Panc1 (cell line): ENCODE measurements at regions of chr2 and their contacts with region 1.

Region 1: DNA sequence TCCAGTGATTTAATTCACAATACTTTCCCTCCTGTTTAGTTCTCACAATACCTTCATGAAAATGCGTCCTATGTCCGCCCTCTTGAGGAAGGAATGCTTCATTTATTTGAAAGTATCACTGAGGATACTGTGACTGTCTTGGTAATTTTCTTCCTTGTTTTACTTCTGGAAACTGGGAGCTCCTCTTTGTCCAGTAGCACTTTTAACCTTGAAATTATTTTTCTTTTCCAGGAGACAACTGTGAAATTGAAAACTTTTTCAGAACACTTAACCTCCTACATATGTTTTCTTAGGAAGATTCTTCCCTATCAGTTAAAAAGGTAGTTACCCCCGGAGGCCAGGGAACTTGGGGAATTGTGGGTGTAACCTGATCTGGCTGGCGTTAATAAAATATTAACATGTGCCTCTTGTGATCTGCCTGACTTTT is 58.9 kb upstream of the STON1 start:
- DNase-seq: peak; percentile 32
- ATAC-seq: peak; percentile 84
- H3K4me3 ChIP-seq: no peak overlapping the region
- H3K27ac ChIP-seq: no peak overlapping the region
- H3K4me1 ChIP-seq: no peaks in the 10 kb centered on the region
- H3K27me3 ChIP-seq: no peaks in the 10 kb centered on the region
- CTCF ChIP-seq: peak; percentile 68; the same call in 1 of the 2 replicates

Region 2: DNA sequence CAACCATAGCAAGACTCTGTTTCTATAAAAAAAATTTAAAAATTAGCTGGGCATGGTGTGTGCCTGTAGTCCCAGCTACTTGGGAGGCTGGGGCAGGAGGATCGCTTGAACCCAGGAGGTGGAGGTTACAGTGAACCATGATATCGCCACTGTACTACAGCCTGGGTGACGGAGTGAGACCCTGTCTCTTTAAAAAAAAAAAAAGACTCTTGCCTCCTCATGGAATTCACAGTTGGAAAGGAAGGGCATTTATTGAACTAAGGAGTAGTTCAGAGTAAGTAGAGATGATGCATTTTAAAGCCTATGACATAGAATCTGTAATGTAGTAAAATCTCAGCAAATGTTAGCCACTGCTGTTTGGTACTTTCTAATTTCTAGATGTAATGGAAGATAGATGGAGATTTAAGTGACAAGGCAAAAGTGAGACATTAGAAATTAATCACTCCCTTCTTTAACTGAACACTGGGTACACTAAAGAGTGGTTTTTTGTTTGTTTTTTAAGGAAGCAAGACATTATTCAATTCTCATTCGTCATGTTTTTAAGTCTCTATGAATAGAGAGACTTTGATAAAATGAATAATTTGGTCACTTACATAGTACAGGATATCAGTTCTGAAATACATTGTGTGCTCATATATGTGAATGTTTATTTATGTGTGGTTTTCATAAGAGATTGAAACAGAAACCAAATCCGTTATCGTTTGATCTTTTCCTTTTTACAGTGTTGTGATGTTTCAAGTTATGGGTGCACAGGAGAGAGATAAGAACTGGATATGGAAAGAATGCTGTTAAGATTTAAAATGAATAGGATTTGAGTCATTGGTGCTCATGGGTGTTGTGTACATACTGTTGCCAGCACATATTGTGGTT is 127.3 kb before region 1 on chr2:
- CTCF ChIA-PET with region 1: no interaction called
- POLR2A ChIA-PET with region 1: no interaction called
- in situ Hi-C with region 1: no loop called
- intact Hi-C with region 1: no loop called
- DNase-seq: peak; percentile 60
- ATAC-seq: peak; percentile 97
- H3K4me3 ChIP-seq: peak overlapping the region; percentile 1 to 10; a peak in 3 of 4 replicates
- H3K27ac ChIP-seq: peak overlapping the region; percentile 7
- H3K4me1 ChIP-seq: peaks cover 13% of the 10 kb centered on the region
- H3K27me3 ChIP-seq: no peaks in the 10 kb centered on the region
- CTCF ChIP-seq: no peak

Region 3: GRCh38 chr2:48383046-48383445 is 88.0 kb before region 1 on chr2:
- CTCF ChIA-PET with region 1: no interaction called
- POLR2A ChIA-PET with region 1: no interaction called
- in situ Hi-C with region 1: no loop called
- intact Hi-C with region 1: no loop called
- DNase-seq: no peak
- ATAC-seq: no peak
- H3K4me3 ChIP-seq: no peak overlapping the region
- H3K27ac ChIP-seq: no peak overlapping the region
- H3K4me1 ChIP-seq: no peaks in the 10 kb centered on the region
- H3K27me3 ChIP-seq: no peaks in the 10 kb centered on the region
- CTCF ChIP-seq: no peak

Region 4: DNA sequence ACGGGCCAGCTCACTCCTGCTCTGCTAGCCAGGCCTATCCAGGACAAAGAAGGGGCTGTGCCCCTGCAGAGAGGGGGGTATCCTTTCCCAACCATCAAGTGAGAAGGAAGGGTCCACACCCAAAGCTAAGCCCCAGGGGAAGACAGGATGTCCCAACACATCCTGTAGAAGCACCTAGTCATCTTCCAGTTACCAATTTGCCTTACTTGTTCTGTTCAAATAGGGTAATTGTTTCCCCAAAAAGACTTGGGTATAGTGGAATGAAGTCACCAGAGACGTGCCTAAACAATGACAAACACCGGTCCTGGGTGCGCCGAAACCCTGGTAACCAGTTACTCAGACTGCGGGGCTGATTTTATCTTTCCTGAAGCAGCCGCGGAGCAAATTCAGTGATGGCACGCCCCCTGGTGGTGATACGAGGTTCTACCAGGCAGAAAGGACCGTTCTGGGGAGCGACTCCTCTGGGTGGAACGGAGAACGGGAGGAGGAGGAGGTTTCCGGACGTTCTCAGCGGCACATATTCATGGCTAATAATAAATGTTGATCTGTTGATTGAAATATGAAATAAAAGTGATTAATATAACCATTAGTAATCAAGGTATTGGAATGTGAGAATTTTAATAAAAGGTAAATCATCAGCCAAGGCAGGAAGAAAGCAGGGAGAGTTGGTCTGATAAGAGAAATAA is 50.4 kb before region 1 on chr2:
- CTCF ChIA-PET with region 1: no interaction called
- POLR2A ChIA-PET with region 1: no interaction called
- in situ Hi-C with region 1: no loop called
- intact Hi-C with region 1: no loop called
- DNase-seq: peak; percentile 85
- ATAC-seq: peak; percentile 92
- H3K4me3 ChIP-seq: peak overlapping the region in 1 of 2 experiments; percentile 19; a peak in 1 of 4 replicates
- H3K27ac ChIP-seq: peak overlapping the region; percentile 25; the same call in 1 of the 2 replicates
- H3K4me1 ChIP-seq: no peaks in the 10 kb centered on the region
- H3K27me3 ChIP-seq: no peaks in the 10 kb centered on the region
- CTCF ChIP-seq: peak; percentile 94

Region 5: GRCh38 chr2:48589170-48589767 is 118.2 kb after region 1 on chr2:
- CTCF ChIA-PET with region 1: no interaction called
- POLR2A ChIA-PET with region 1: interaction called, 10 read pairs
- in situ Hi-C with region 1: no loop called
- intact Hi-C with region 1: loop called (anchors 5 kb)
- DNase-seq: peak; percentile 35
- ATAC-seq: peak; percentile 70; the same call in 1 of the 2 replicates
- H3K4me3 ChIP-seq: peak overlapping the region in 1 of 2 experiments; percentile 7; a peak in 1 of 4 replicates
- H3K27ac ChIP-seq: no peak overlapping the region
- H3K4me1 ChIP-seq: no peaks in the 10 kb centered on the region
- H3K27me3 ChIP-seq: no peaks in the 10 kb centered on the region
- CTCF ChIP-seq: peak; percentile 79

Region 6: GRCh38 chr2:48829036-48829435 is 358.0 kb after region 1 on chr2:
- CTCF ChIA-PET with region 1: no interaction called
- POLR2A ChIA-PET with region 1: no interaction called
- in situ Hi-C with region 1: no loop called
- intact Hi-C with region 1: no loop called
- DNase-seq: no peak
- ATAC-seq: no peak
- H3K4me3 ChIP-seq: no peak overlapping the region
- H3K27ac ChIP-seq: no peak overlapping the region
- H3K4me1 ChIP-seq: no peaks in the 10 kb centered on the region
- H3K27me3 ChIP-seq: no peaks in the 10 kb centered on the region
- CTCF ChIP-seq: no peak